Endothelial cell of umbilical vein (primary cell): ENCODE measurements at regions of chr5 and their contacts with region 1.

Region 1: DNA sequence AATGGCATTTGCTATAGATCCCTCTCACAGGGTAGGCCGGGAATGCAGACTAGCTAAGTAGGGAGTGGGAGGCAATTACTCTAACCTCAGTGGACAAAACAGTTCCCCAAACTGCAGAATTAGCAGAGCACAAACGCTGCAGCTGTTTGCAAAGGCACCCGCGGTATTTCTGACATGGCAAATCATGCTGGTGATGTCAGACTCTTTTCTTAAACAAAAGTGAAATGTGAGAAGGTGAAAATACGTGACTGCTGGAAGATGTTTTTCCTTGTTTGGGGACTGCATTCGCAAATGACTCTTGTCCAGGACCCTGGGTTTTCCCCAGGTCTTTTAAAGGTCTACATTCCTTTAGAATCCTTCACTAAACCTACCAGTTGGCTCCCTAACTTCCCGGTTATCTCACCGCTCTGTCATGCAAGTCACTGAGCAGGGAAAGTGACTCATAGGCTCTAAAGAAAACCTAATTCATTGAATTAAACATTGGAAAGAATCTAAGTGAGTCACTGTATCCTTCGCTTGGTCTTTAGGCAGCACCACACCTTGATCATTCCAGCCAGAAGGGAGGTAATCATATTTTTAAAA is 91.5 kb upstream of the DNAH5 start:
- DNase-seq: peak; percentile 96
- H3K4me3 ChIP-seq: peak overlapping the region in 1 of 3 experiments; percentile 29
- H3K27ac ChIP-seq: peak overlapping the region; percentile 93
- H3K4me1 ChIP-seq: peaks cover 54% of the 10 kb centered on the region
- H3K27me3 ChIP-seq: no peaks in the 10 kb centered on the region
- CTCF ChIP-seq: no peak
- POLR2A ChIP-seq: no peak

Region 2: GRCh38 chr5:13987843-13988464 is 48.0 kb before region 1 on chr5:
- CTCF ChIA-PET with region 1: interaction called, 3 read pairs
- POLR2A ChIA-PET with region 1: no interaction called
- dilution Hi-C with region 1: no loop called
- intact Hi-C with region 1: loop called (anchors 1 kb)
- DNase-seq: peak; percentile 64
- H3K4me3 ChIP-seq: no peak overlapping the region
- H3K27ac ChIP-seq: no peak overlapping the region
- H3K4me1 ChIP-seq: peaks cover 16% of the 10 kb centered on the region
- H3K27me3 ChIP-seq: no peaks in the 10 kb centered on the region
- CTCF ChIP-seq: peak; percentile 69 to 84
- POLR2A ChIP-seq: no peak

Region 3: DNA sequence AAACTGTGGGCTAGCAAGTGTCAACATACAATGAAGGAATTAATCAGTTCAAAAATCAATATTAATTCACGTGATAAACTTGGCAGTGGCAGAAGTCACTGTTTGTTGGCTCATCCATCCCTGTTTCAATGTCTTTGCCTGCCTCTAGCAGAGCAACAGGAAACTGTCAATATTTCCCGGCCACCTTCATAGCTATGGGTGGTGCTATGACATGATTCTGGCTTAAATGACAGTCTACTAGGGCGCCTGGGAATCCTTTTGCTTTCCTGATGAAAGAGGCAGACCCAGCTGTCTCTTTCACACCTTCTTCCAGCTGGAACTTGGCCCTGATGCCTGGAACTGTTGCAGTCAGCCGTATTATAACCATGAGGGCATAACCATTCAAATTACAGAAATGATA is 19.4 kb before region 1 on chr5:
- CTCF ChIA-PET with region 1: interaction called, 11 read pairs
- POLR2A ChIA-PET with region 1: interaction called, 3 read pairs
- dilution Hi-C with region 1: no loop called
- intact Hi-C with region 1: loop called (anchors 1 kb)
- DNase-seq: no peak
- H3K4me3 ChIP-seq: no peak overlapping the region
- H3K27ac ChIP-seq: no peak overlapping the region
- H3K4me1 ChIP-seq: peaks cover 5% of the 10 kb centered on the region
- H3K27me3 ChIP-seq: peaks cover 15 to 16% of the 10 kb centered on the region in 2 experiments
- CTCF ChIP-seq: no peak
- POLR2A ChIP-seq: no peak

Region 4: GRCh38 chr5:14142827-14143548 is 107.0 kb after region 1 on chr5 and contains the start of gene TRIO:
- CTCF ChIA-PET with region 1: no interaction called
- POLR2A ChIA-PET with region 1: no interaction called
- dilution Hi-C with region 1: no loop called
- intact Hi-C with region 1: loop called (anchors 1 kb)
- DNase-seq: peak; percentile 94
- H3K4me3 ChIP-seq: peak within 1 kb of the TSS; percentile 55 to 98 (median 91)
- H3K27ac ChIP-seq: peak within 1 kb of the TSS; percentile 94
- H3K4me1 ChIP-seq: peaks cover 33% of the 10 kb centered on the region
- H3K27me3 ChIP-seq: peaks cover 9 to 10% of the 10 kb centered on the region in 2 experiments
- CTCF ChIP-seq: peak; percentile 36 to 72
- POLR2A ChIP-seq: peak; percentile 85
- total RNA-seq, gene TRIO: 242 and 248 TPM in 2 replicates

Region 5: GRCh38 chr5:14204785-14205321 is 168.9 kb after region 1 on chr5:
- CTCF ChIA-PET with region 1: no interaction called
- POLR2A ChIA-PET with region 1: no interaction called
- dilution Hi-C with region 1: no loop called
- intact Hi-C with region 1: loop called (anchors 5 kb)
- DNase-seq: peak; percentile 93
- H3K4me3 ChIP-seq: peak overlapping the region in 1 of 3 experiments; percentile 14
- H3K27ac ChIP-seq: peak overlapping the region; percentile 87
- H3K4me1 ChIP-seq: peaks cover 82% of the 10 kb centered on the region
- H3K27me3 ChIP-seq: no peaks in the 10 kb centered on the region
- CTCF ChIP-seq: no peak
- POLR2A ChIP-seq: no peak